Dorsolateral prefrontal cortex (tissue), 120 donors: ENCODE measurements at regions of chr7 and their contacts with region 1.

Region 1: GRCh38 chr7:1059200-1060091 is 15.1 kb downstream of the GPR146 start:
- DNase-seq: no peak
- H3K4me3 ChIP-seq: no peak overlapping the region
- H3K27ac ChIP-seq: peak overlapping the region in 54 of 59 donors; percentile 0 to 80 (median 65)
- H3K27me3 ChIP-seq: no peaks in the 10 kb centered on the region
- CTCF ChIP-seq: no peak

Region 2: DNA sequence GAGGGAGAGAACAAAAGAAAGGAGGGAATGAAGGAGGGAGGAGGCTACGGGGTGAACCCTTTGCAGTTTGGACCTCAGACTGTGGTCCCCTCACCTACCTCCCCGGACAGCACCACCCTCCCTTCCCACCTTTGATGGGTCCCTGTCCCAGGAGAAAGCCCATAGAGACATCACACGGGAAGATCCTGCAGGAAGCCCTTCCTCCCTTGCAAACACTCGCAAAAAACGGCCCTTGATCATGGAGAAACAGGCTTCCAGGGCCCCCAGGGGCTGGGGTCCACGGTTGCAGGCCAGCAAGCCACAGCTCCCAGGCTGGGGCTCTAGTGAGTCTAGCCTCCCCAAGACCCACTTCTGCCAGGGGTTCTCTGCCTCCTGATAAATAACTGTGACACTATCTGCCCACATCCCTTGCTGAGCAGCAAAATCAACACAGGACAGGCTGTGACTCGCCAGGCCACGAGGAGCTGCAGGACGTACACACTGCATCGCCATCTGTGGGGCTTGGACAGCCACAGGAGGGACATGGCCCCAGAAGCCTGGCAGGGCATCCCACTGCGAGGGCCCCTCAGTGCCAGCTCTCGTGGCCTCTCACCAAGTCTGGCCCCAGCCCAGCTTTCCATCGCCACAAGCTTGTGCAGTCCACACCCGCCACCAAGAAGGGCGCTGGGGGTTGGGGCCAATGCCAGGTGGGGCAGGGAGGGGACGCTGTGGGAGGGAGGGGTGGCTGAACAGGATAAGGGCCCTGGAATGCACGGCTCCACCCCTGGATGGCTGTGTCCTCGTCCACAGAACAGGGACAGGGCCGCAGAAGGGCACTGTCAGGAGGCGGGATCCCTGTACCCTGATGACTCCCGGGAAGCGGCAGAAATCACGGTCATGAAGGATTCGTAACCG is 574.0 kb before region 1 on chr7:
- intact Hi-C with region 1: no loop called
- DNase-seq: peak in 3 of 10 donors; percentile 9 to 39 (median 32)
- H3K4me3 ChIP-seq: no peak overlapping the region
- H3K27ac ChIP-seq: no peak overlapping the region
- H3K27me3 ChIP-seq: peaks cover 0 to 5% (median 0%) of the 10 kb centered on the region in 45 donors
- CTCF ChIP-seq: no peak

Region 3: DNA sequence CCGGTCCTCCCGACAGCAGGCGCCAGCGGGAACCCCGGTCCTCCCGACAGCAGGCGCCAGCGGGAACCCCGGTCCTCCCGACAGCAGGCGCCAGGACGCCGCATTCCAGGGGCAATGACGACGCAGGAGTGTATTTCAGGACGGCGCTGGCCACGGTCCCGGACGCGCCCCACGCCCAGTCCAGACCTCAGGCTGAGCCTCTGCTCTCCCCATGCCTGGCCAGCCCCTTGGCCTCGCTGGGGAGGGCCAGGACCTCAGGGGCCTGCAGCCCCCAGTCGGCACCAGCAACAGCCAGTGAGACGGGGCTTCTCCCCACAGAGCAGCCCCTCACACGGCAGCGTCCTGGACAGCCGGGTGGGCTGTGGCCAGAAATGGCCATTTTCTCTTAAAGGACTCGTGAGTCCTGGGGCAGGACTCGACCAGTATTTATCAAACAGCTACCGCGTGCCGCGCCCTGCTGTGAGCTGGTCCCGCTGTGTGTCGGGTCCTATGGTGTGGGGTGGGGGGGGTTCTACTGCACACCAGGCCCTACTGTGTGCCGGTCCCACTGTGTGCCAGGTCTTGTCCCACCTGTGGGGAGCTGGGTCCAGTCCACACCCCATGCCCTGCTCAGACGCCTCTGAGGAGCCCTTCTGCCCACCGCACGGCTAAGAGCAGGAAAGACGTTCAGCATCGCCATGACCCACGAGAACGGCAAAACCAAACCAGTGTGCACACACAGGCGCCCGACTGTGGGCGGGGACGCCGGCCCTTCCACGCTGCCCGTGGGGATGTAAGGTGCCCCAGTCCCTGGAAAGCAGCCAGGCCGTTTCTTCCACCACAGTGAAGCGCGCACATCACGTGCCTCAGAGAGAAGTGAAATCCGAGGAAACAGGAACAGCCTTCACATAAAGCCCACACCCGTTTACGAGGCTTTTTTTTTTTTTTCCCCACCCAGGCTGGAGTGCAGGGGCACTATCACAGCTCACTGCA is 149.8 kb before region 1 on chr7:
- intact Hi-C with region 1: loop called in 1 of 2 experiments (anchors 5 kb)
- DNase-seq: peak in 5 of 10 donors; percentile 57 to 68 (median 64)
- H3K4me3 ChIP-seq: peak overlapping the region in 33 of 59 donors; percentile 9 to 55 (median 38)
- H3K27ac ChIP-seq: peak overlapping the region; percentile 49 to 100 (median 97)
- H3K27me3 ChIP-seq: no peaks in the 10 kb centered on the region
- CTCF ChIP-seq: peak in 2 of 56 donors; percentile 3 to 5